ENCODE measurements at regions of chr17 and their contacts with region 1.

Region 1: GRCh38 chr17:29844339-29845048 is 85.5 kb downstream of the SSH2 start:
- DNase-seq: peak in 1 of 2 donors; percentile 77
- H3K4me3 ChIP-seq: no peak overlapping the region
- H3K27ac ChIP-seq: no peak overlapping the region
- H3K4me1 ChIP-seq: peaks cover 3 to 25% (median 15%) of the 10 kb centered on the region in 4 donors
- H3K27me3 ChIP-seq: no peaks in the 10 kb centered on the region
- CTCF ChIP-seq: no peak
- EP300 ChIP-seq: no peak
- POLR2A ChIP-seq: no peak

Region 2: GRCh38 chr17:30244853-30245385 is 400.4 kb after region 1 on chr17:
- intact Hi-C with region 1: loop called (anchors 10 kb)
- DNase-seq: no peak
- H3K4me3 ChIP-seq: no peak overlapping the region
- H3K27ac ChIP-seq: no peak overlapping the region
- H3K4me1 ChIP-seq: no peaks in the 10 kb centered on the region
- H3K27me3 ChIP-seq: peaks cover 0 to 11% (median 0%) of the 10 kb centered on the region in 3 donors
- CTCF ChIP-seq: no peak
- EP300 ChIP-seq: no peak
- POLR2A ChIP-seq: no peak